Spleen (tissue), 13 donors: ENCODE measurements at regions of chr18 and their contacts with region 1.

Region 1: DNA sequence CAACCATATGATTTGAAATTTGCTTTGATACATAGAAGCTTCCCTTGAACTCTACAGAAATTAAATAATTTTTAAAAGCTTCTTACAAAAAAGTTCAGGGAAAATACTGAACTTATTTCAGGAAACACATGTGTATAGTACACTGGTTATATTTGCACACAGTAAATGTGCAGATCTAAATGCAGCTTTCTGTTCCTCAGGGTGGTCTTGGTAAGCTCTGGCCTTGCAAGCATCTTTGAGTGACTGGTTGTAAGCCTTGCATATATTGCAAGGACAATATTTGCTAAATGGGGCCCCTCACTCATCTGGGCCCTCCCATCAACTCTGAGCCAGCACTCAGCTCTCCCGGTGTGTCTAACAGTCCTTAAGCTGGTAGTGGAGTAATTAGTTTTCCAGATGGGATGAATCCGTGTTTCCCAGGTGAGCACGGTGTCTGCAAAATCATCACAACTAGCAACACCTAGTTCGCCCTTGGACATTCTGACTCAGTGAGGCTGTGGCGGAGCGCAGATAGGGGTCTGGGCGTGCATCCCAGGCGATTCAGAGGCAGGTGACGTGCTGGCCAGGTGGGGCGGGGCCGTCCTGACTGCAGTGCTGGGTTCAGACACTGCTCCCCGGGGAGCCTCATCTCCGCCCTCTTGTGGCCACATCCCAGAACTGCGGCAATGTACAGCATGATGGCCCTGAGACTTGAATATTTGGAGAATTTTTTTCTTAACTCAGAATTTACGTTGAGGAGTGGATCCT is 149.6 kb downstream of the MBP start:
- DNase-seq: peak; percentile 96
- H3K4me3 ChIP-seq: peak overlapping the region in 1 of 8 donors; percentile 24
- H3K27ac ChIP-seq: no peak overlapping the region
- H3K4me1 ChIP-seq: peaks cover 0 to 49% (median 17%) of the 10 kb centered on the region in 6 donors
- H3K27me3 ChIP-seq: no peaks in the 10 kb centered on the region
- CTCF ChIP-seq: peak; percentile 79 to 95 (median 90)
- POLR2A ChIP-seq: no peak

Region 2: GRCh38 chr18:76922107-76922506 is 60.9 kb before region 1 on chr18:
- intact Hi-C with region 1: loop called (anchors 5 kb)
- DNase-seq: peak; percentile 87
- H3K4me3 ChIP-seq: no peak overlapping the region
- H3K27ac ChIP-seq: no peak overlapping the region
- H3K4me1 ChIP-seq: peaks cover 0 to 11% (median 0%) of the 10 kb centered on the region in 6 donors
- H3K27me3 ChIP-seq: no peaks in the 10 kb centered on the region
- CTCF ChIP-seq: peak; percentile 33 to 78 (median 67)
- POLR2A ChIP-seq: no peak